ENCODE measurements at regions of chrX and their contacts with region 1.

Region 1: DNA sequence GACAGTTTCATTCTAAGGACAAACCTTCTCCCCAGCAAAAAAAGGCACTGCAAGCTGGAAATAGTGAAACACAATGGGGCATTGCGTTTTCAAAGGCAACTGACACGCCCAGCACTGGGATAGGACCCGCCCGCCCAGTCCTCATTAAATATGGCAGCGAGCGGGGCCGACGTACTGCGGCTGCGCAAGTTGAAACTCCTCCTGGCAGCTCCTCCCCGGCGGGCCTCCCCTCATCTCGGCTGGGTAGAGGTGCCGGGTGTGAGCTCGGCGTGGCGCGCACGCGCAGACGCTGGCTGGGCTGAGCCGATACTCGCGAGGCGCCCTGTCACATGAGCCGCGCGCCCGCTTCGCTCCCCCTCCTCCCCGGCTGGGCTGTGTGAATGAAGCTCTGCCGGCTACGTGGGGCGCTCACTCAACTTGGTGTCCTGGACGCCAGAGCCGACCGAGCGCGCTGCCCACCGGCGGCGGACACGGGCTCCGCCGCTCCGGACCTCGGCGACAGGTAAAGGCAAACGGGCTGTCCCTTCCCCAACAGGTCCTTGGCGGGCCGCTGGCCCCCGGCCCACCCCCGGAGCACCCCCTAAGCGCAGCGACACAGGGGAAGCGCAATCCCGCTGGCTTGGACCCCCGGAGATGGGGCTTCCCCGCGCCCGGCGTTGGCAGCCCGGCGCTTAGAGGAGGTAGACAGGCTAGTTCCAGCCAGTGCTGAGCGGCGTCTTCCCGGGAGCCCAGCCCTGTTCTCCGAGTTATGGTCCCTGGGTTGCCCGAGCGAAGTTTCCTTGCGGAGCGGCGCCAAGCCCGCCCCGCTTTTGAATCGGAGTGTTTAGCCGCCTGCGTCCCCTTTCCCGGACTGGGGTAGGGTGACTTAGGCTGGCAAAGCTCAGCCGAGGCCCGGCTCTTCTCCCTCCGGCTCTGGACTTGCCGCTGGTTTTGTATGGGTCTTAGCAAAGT is at the start of gene CLCN5:
- DNase-seq: peak; percentile 93
- CTCF ChIP-seq: no peak

Region 2: DNA sequence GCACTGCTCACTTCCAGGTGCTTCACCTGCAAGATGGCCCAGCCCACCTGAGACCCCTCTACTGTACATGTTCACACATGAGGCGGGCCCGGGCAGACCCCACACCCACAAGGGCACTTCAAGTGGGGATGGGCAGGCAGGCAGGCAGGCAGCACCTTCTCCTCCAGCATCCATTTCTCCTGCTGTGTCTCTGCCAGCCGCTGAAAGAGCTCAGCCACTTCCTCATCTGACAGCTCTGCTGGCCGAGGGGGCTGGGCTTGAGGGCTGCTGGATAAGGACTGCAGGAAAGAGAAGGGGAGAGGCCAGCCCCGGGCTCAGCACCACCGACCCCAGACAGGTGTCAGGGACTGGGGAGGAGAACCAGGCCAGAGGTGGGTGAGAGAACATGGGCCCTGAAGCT is 946.5 kb before region 1 on chrX:
- CTCF ChIA-PET with region 1: no interaction called
- POLR2A ChIA-PET with region 1: no interaction called
- DNase-seq: no peak
- CTCF ChIP-seq: no peak

Region 3: DNA sequence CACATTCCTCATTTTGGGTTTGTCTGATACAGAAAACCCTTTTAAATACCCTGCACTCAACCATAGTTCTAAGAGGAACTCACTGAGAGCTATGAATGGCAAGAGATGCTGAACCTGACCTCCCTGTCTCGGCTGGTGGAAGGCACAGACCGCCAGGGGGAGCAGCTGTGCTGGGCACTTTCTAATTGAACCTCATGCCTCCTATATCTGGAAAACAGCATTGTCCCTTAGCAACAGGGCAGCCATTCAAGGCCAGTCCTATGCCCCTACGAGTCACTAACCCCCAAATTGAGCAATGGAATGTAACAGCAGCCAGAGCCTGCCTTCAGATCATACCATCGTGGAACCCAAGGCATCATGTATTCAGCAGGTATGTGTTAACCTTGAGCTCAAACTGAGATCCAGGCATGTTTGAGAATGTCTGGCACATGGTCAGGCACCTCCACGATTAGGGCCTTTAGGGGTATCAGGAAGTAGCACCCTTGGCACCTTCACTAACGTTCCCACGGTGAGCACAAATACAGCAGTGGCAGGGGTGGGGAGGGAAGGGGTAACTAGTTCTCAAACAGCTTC is 38.2 kb before region 1 on chrX:
- CTCF ChIA-PET with region 1: interaction called, 28 read pairs
- POLR2A ChIA-PET with region 1: no interaction called
- DNase-seq: peak; percentile 39
- CTCF ChIP-seq: peak; percentile 64

Measured in GM10248 (cell line).